WTC11 (cell line): ENCODE measurements at regions of chr6 and their contacts with region 1.

Region 1: DNA sequence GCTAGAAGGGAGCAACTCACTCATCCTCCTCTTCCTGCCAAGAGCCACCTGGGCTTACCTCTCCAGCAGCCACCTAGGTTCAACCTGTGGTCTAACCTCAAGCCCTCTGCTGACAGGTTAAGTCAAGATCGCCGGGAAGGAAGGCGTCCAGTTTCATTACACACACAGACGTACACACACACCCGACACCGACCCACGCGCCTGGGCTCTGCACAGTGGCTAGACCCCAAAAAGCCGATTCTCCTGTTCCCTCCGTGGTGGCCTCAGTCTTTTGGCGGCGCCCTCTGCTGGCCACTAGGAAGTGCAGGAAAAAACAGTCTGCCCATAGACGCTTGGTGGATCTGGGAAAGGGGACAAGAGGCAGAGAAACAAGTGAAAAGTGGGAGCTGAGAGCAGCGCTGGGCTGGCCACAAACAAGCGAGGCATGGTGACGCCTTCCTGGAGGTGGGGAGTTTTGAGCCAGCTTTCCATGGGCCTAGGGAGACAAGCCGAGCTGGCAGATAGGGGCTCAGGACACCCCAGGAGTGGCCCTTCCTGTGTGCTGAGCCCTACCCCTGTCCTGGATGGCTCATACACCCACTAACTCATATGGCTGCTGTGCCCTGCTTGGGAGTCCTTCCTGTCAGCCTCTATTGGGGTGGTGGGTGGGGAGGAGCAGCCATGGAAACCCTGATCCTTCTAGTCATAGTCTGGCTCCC is 52.7 kb downstream of the MRPL14 start:
- DNase-seq: peak; percentile 64
- ATAC-seq: peak; percentile 51
- H3K4me3 Mint-ChIP-seq: peak overlapping the region; percentile 77
- H3K27ac Mint-ChIP-seq: peak overlapping the region; percentile 31; the same call in 1 of the 2 replicates
- H3K4me1 Mint-ChIP-seq: peaks cover 45% of the 10 kb centered on the region
- H3K27me3 Mint-ChIP-seq: no peaks in the 10 kb centered on the region; the same call in 1 of the 2 replicates
- CTCF ChIP-seq: peak; percentile 85; the same call in 1 of the 2 replicates

Region 2: DNA sequence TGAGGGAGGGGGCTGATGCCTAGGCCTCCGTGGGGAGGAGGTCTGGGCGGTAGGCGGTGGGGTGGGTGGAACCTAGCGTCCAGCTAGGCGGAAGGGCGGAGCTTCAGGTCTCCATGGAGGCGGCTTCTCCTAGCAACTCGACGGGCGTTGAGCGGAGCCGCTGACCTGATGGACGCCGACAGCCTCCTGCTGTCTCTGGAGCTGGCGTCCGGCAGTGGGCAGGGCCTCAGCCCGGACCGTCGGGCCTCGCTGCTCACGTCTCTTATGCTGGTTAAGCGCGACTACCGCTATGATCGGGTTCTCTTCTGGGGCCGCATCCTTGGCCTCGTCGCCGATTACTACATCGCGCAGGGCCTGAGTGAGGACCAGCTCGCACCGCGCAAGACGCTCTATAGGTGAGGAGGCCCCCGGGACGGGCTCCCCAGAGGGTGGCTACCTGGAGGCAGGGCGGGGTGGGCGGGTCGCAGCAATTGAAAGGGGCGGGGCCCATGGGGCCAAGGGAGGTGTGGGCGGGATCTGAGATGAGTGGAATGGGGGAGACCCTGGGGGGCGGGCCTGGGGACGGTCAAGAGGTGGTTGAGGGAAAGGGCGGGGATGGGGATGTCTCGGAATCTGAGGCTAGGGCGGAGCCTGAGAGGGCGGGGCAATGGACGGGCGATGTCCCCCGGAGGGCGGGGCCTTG is 429.5 kb before region 1 on chr6 and contains the start of gene RSPH9:
- CTCF ChIA-PET with region 1: interaction called, 10 read pairs
- POLR2A ChIA-PET with region 1: no interaction called
- DNase-seq: peak; percentile 99
- ATAC-seq: peak; percentile 94
- H3K4me3 Mint-ChIP-seq: peak within 1 kb of the TSS; percentile 76
- H3K27ac Mint-ChIP-seq: peak within 1 kb of the TSS; percentile 99
- H3K4me1 Mint-ChIP-seq: peaks cover 15% of the 10 kb centered on the region
- H3K27me3 Mint-ChIP-seq: peaks cover 3% of the 10 kb centered on the region; the same call in 1 of the 2 replicates
- CTCF ChIP-seq: no peak
- total RNA-seq, gene RSPH9: 0.16 to 0.35 TPM (median 0.32 TPM) in 3 replicates

Region 3: DNA sequence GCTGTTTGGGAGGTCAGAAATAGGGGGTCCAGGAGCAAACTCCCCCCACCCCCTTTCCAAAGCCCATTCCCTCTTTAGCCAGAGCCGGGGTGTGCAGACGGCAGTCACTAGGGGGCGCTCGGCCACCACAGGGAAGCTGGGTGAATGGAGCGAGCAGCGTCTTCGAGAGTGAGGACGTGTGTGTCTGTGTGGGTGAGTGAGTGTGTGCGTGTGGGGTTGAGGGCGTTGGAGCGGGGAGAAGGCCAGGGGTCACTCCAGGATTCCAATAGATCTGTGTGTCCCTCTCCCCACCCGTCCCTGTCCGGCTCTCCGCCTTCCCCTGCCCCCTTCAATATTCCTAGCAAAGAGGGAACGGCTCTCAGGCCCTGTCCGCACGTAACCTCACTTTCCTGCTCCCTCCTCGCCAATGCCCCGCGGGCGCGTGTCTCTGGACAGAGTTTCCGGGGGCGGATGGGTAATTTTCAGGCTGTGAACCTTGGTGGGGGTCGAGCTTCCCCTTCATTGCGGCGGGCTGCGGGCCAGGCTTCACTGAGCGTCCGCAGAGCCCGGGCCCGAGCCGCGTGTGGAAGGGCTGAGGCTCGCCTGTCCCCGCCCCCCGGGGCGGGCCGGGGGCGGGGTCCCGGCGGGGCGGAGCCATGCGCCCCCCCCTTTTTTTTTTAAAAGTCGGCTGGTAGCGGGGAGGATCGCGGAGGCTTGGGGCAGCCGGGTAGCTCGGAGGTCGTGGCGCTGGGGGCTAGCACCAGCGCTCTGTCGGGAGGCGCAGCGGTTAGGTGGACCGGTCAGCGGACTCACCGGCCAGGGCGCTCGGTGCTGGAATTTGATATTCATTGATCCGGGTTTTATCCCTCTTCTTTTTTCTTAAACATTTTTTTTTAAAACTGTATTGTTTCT is 304.8 kb before region 1 on chr6 and contains the start of gene VEGFA:
- CTCF ChIA-PET with region 1: interaction called, 58 read pairs
- POLR2A ChIA-PET with region 1: interaction called, 6 read pairs
- DNase-seq: peak; percentile 94
- ATAC-seq: peak; percentile 49
- H3K4me3 Mint-ChIP-seq: peak within 1 kb of the TSS; percentile 98
- H3K27ac Mint-ChIP-seq: peak within 1 kb of the TSS; percentile 85
- H3K4me1 Mint-ChIP-seq: peaks cover 48% of the 10 kb centered on the region
- H3K27me3 Mint-ChIP-seq: peaks cover 11% of the 10 kb centered on the region
- CTCF ChIP-seq: peak; percentile 94
- total RNA-seq, gene VEGFA: 41.9 to 44.4 TPM (median 43.8 TPM) in 3 replicates

Region 4: DNA sequence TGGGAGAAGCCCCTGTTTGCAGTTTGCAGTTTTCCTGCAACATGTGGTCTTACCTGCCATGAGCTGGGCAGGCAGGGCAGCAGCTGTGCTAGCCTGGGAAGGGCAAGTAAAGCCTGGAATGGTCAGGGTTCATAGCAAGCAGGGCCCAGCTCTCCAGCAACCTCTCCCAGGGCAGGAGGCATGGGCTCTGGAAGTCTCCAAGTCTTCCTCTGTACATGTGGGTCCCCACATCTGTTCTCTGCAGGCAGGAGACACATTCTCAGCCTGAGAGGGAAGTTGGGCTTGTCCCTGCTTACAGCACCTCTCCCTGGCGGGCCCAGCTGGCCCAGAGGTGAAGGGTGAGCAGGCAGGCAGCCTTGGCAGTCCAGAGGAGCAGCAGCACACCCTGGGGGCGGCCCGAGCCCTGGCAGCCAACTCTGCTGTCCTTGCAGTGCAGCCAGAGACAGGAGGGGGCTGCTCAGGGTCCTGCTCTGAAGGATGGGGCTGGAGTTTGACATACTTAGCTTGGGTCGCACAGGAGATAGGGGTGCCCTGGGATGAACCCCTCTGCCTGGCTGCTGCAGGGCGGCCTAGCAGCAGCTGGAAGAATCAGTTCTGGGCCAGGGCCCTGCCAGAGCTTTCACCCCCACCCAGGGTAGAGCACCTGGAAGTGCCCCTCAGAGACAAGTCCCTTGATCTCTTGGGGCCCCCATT is 123.4 kb before region 1 on chr6:
- CTCF ChIA-PET with region 1: interaction called, 30 read pairs
- POLR2A ChIA-PET with region 1: no interaction called
- DNase-seq: peak; percentile 90
- ATAC-seq: peak; percentile 95
- H3K4me3 Mint-ChIP-seq: no peak overlapping the region
- H3K27ac Mint-ChIP-seq: no peak overlapping the region
- H3K4me1 Mint-ChIP-seq: peaks cover 4% of the 10 kb centered on the region
- H3K27me3 Mint-ChIP-seq: no peaks in the 10 kb centered on the region
- CTCF ChIP-seq: no peak; the same call in none of the 2 replicates

Region 5: DNA sequence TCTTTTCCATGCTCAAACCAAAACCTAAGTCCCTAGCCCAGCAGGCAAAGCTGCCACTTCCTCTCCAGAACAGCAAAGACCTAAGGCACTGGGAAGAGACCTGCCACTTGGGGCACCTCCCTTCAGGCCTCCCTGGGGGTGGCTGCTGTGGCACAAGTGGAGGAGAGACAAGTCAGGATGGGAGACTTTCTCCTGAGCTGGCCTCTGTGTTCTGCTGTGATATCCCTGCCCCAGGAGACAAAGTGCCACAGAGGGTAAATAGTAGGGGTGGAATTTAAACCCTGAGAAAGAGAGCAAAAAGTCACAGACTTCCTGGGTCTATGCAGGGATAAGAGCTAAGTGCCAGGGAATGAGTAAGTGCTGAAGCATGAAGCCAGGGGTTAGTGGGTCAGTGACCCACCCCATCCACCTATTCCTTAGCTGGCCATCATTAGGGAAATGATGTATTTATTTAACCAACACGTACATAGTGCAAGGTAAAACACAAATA is 31.6 kb before region 1 on chr6:
- CTCF ChIA-PET with region 1: interaction called, 16 read pairs
- POLR2A ChIA-PET with region 1: no interaction called
- DNase-seq: no peak
- ATAC-seq: no peak
- H3K4me3 Mint-ChIP-seq: no peak overlapping the region
- H3K27ac Mint-ChIP-seq: peak overlapping the region; percentile 30
- H3K4me1 Mint-ChIP-seq: peaks cover 37% of the 10 kb centered on the region
- H3K27me3 Mint-ChIP-seq: no peaks in the 10 kb centered on the region
- CTCF ChIP-seq: no peak

Region 6: DNA sequence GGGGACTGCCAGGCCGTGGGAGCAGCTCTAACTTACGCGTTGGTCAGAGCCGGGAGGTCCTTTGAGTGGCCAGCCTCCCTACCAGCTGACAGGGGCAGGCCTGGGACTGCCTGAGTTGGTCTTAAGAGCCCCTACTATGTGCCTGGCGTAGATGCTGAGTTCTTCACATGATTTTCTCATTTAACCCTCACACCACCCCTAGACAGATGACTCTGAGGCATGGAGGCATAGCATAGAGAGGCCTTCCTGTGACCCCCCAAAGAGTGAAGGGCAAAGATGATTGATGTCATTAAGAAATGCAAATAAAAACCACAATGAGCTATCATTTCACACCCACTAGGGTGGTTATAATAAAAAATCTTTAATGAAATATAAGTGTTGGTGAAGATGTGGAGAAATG is 15.9 kb after region 1 on chr6:
- CTCF ChIA-PET with region 1: interaction called, 12 read pairs
- POLR2A ChIA-PET with region 1: no interaction called
- DNase-seq: no peak
- ATAC-seq: no peak
- H3K4me3 Mint-ChIP-seq: no peak overlapping the region
- H3K27ac Mint-ChIP-seq: no peak overlapping the region
- H3K4me1 Mint-ChIP-seq: no peaks in the 10 kb centered on the region
- H3K27me3 Mint-ChIP-seq: no peaks in the 10 kb centered on the region; the same call in 1 of the 2 replicates
- CTCF ChIP-seq: no peak

Region 7: DNA sequence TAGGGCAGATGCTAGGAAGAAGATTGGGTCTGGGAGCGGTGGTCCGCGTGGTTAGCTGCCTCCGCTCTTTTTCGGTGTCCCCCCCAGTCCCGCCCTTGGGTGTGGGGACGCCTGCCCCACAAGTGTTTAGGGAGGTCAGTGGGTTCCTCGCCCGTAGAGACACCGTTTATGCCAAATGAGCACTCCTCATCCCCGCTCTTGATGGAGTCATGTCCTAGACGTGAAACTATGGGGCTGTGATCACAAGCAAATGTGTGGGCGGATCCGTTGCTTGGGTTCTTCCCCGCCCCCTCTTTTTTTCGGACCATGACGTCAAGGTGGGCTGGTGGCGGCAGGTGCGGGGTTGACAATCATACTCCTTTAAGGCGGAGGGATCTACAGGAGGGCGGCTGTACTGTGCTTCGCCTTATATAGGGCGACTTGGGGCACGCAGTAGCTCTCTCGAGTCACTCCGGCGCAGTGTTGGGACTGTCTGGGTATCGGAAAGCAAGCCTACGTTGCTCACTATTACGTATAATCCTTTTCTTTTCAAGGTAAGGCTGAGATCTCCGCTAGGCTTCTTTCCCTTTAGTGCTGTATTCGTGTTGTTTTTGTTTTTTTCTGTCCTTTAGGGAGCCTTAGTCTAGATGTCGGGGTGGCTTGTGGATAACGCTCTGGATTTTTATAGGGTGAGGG is 172.2 kb after region 1 on chr6 and contains the start of gene HSP90AB1:
- CTCF ChIA-PET with region 1: no interaction called
- POLR2A ChIA-PET with region 1: no interaction called
- DNase-seq: peak; percentile 93
- ATAC-seq: peak; percentile 59
- H3K4me3 Mint-ChIP-seq: peak within 1 kb of the TSS; percentile 99
- H3K27ac Mint-ChIP-seq: peak within 1 kb of the TSS; percentile 99
- H3K4me1 Mint-ChIP-seq: peaks cover 37% of the 10 kb centered on the region
- H3K27me3 Mint-ChIP-seq: peaks cover 10% of the 10 kb centered on the region
- CTCF ChIP-seq: no peak
- total RNA-seq, gene HSP90AB1: 2,159 to 2,172 TPM (median 2,171 TPM) in 3 replicates

Region 8: GRCh38 chr6:44925100-44925739 is 850.6 kb after region 1 on chr6:
- CTCF ChIA-PET with region 1: no interaction called
- POLR2A ChIA-PET with region 1: no interaction called
- DNase-seq: no peak
- ATAC-seq: peak; percentile 50; the same call in 1 of the 2 replicates
- H3K4me3 Mint-ChIP-seq: no peak overlapping the region
- H3K27ac Mint-ChIP-seq: peak overlapping the region; percentile 50; the same call in 1 of the 2 replicates
- H3K4me1 Mint-ChIP-seq: 0 out of 2 replicates have a peak, but pooled peaks cover 7% of the 10 kb centered on the region
- H3K27me3 Mint-ChIP-seq: no peaks in the 10 kb centered on the region
- CTCF ChIP-seq: no peak